Endothelial cell of umbilical vein (primary cell): ENCODE measurements at regions of chr6 and their contacts with region 1.

Region 1: DNA sequence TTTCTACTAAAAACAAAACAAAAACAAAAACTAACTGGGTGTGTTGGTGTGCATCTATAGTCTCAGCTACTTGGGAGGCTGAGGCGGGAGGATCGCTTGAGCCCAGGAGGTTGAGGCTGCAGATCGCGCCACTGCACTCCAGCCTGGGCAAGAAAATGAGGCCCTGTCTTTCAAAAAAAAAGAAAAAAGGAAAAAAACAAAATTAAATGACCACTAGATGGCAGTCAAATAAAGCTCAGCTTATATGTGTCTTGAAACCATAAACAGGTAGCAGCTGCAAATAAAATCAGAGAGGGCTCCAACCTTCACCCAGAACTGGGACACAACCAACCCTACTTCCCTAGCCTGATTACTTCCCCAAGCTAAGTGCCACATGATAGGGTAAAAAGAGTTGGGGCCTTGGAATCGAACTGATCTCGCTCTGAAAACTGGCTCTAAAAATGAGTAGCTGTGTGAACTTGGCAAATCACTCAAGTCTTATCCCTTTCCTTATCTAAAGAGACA is 67.1 kb upstream of the ADGRF4 start:
- DNase-seq: peak; percentile 76
- H3K4me3 ChIP-seq: no peak overlapping the region
- H3K27ac ChIP-seq: no peak overlapping the region
- H3K4me1 ChIP-seq: no peaks in the 10 kb centered on the region
- H3K27me3 ChIP-seq: no peaks in the 10 kb centered on the region
- CTCF ChIP-seq: peak; percentile 37 to 43
- POLR2A ChIP-seq: no peak

Region 2: DNA sequence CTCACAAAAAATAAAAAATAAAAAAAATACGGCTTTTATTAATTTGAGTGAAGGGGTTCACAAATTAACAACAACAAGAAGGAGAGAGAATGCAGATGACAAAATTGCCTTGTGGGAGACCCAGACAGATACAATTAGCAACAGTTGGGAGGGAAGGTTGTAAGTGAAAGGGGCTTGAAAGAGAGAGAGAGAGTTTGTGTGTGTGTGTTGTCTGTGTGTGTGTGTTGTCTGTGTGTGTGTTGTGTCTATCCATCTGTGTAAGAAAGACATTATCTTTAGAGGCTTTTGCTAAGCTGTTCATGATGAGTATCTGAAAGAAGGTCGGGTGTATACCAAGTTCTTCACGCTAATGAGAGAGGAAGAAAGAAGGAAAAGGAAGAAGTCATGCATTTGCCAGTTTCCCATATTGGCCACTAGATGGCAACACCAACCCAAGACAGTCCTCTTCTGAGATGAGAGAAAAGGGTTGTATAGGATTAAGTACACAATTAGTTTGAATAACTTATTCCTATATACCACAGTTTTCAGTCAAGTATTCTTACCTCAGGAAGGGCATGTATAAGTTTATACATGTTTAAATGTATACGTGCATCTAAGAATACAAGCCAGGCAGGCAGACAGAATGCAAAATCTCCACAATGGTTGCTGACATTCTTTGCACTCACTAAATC is 217.4 kb before region 1 on chr6:
- CTCF ChIA-PET with region 1: interaction called, 14 read pairs
- POLR2A ChIA-PET with region 1: no interaction called
- dilution Hi-C with region 1: no loop called
- intact Hi-C with region 1: loop called (anchors 1 kb)
- DNase-seq: peak; percentile 84
- H3K4me3 ChIP-seq: peak overlapping the region in 2 of 3 experiments; percentile 22 to 73
- H3K27ac ChIP-seq: peak overlapping the region; percentile 40
- H3K4me1 ChIP-seq: peaks cover 4% of the 10 kb centered on the region
- H3K27me3 ChIP-seq: no peaks in the 10 kb centered on the region
- CTCF ChIP-seq: peak; percentile 66 to 74
- POLR2A ChIP-seq: no peak

Region 3: DNA sequence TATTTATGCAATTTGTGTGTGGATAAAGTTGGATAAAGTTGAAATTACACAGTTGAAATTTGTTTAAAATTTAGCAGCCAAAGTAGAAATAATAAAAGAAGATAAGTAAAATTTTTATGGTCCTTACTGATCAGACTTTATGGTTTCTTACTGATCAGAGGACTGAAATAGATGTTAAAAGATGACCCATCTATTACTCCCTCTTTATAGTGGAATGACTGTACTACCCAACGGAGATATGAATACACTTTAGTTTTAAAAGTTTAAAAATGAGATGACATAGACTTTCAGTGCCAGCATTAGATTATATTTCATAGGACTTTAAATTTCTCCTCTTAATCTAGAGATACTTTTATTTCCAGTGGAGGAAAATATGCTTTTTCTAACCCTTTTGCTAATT is 31.8 kb before region 1 on chr6:
- CTCF ChIA-PET with region 1: interaction called, 11 read pairs
- POLR2A ChIA-PET with region 1: no interaction called
- dilution Hi-C with region 1: no loop called
- intact Hi-C with region 1: no loop called
- DNase-seq: no peak
- H3K4me3 ChIP-seq: no peak overlapping the region
- H3K27ac ChIP-seq: no peak overlapping the region
- H3K4me1 ChIP-seq: no peaks in the 10 kb centered on the region
- H3K27me3 ChIP-seq: no peaks in the 10 kb centered on the region
- CTCF ChIP-seq: no peak
- POLR2A ChIP-seq: no peak

Region 4: DNA sequence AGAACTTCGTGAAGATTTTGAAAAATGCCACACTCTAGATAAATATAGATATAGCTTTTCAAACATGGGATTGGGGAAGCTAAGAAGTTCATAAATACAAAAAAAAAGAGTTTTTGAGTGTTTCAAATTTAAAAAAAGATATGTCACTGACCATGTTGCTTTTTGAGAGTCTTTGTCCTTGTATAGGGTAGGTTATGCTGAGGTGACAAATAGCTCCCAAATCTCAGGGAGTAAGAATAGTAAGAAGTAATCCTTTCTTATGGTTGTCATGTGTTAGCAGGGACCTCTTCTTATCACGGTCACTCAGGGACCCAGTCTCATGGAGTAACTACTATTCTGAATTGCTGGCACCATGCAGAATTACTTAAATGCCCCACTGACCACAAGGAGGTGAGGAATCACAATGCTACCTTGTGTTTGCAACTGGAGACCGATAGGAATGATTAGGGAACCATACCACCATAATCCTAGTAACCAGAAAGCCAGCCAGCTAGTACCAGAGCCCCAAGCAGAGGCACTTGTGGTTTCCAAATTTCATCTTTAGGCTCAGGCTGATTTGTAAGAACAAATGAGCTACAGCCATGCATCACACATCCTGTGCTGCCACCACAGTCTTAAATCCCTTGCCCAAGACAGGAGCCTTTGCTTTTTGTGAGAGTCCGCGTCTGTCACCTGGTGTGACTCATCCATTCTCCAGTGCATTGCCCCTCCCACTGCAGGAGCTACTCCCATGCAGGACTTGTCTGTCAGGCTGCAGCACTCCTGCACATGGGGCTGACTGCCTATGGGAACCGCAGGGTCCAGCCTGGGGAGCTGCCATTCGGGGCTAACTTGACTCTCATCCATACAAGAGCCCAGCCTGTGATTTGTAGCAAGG is 24.6 kb after region 1 on chr6:
- CTCF ChIA-PET with region 1: interaction called, 7 read pairs
- POLR2A ChIA-PET with region 1: no interaction called
- dilution Hi-C with region 1: no loop called
- intact Hi-C with region 1: loop called (anchors 2 kb)
- DNase-seq: peak; percentile 31
- H3K4me3 ChIP-seq: no peak overlapping the region
- H3K27ac ChIP-seq: no peak overlapping the region
- H3K4me1 ChIP-seq: peaks cover 5% of the 10 kb centered on the region
- H3K27me3 ChIP-seq: peaks cover 0 to 2% of the 10 kb centered on the region in 2 experiments
- CTCF ChIP-seq: no peak
- POLR2A ChIP-seq: no peak

Region 5: DNA sequence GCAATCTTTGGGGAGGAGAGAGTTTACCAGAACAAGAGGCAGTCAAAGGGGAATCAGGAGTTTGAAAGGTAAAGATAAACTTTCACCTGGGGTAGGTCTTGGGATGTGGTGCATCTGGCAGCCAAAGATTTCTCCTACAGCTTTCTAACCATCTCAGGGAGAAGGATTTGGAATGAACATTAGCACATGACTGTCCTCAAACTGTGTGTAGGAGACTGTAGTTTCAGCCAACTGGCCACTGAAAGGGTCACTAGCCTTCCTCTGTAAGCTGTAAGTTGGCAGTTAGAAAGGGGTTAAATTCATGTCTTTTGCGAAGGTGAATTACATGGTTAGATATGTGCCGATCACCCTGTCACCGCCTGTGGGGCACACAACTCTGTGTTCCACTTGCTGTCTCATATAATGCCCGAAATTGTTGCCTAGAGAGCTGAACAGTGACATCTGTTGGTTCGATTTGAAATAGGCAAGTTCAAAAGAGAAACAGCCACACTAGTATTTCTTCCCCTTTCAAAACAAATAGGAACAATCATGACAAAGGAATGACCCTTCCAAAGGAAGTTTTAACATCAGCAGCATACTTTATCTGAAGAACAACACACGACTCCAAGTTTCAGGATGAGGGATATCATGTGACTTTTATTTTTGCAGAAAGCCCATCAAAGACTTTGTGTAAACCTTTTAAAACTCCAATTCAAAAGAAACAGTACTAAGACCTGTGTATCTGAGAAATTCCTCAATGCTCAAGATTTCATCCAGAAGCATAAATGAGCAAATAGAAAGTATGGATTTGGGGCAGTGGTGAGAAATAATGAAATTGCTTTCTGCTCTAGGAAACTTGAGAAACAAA is 149.4 kb after region 1 on chr6:
- CTCF ChIA-PET with region 1: interaction called, 90 read pairs
- POLR2A ChIA-PET with region 1: no interaction called
- dilution Hi-C with region 1: no loop called
- intact Hi-C with region 1: loop called (anchors 1 kb)
- DNase-seq: peak; percentile 86
- H3K4me3 ChIP-seq: no peak overlapping the region
- H3K27ac ChIP-seq: no peak overlapping the region
- H3K4me1 ChIP-seq: peaks cover 3% of the 10 kb centered on the region
- H3K27me3 ChIP-seq: peaks cover 0 to 4% of the 10 kb centered on the region in 2 experiments
- CTCF ChIP-seq: peak; percentile 50 to 68
- POLR2A ChIP-seq: no peak

Region 6: GRCh38 chr6:48098923-48099322 is 467.6 kb after region 1 on chr6:
- CTCF ChIA-PET with region 1: interaction called, 3 read pairs
- POLR2A ChIA-PET with region 1: no interaction called
- dilution Hi-C with region 1: no loop called
- intact Hi-C with region 1: loop called (anchors 10 kb)
- DNase-seq: peak; percentile 70
- H3K4me3 ChIP-seq: no peak overlapping the region
- H3K27ac ChIP-seq: no peak overlapping the region
- H3K4me1 ChIP-seq: peaks cover 33% of the 10 kb centered on the region
- H3K27me3 ChIP-seq: no peaks in the 10 kb centered on the region
- CTCF ChIP-seq: no peak
- POLR2A ChIP-seq: no peak